ENCODE measurements at regions of chr1 and their contacts with region 1.

Region 1: GRCh38 chr1:100292711-100293110 is 26.7 kb downstream of the RTCA start:
- DNase-seq: peak; percentile 96
- H3K4me3 ChIP-seq: no peak overlapping the region
- H3K27ac ChIP-seq: peak overlapping the region; percentile 97
- H3K4me1 ChIP-seq: peaks cover 43% of the 10 kb centered on the region
- H3K27me3 ChIP-seq: no peaks in the 10 kb centered on the region
- CTCF ChIP-seq: no peak
- POLR2A ChIP-seq: peak; percentile 82

Region 2: DNA sequence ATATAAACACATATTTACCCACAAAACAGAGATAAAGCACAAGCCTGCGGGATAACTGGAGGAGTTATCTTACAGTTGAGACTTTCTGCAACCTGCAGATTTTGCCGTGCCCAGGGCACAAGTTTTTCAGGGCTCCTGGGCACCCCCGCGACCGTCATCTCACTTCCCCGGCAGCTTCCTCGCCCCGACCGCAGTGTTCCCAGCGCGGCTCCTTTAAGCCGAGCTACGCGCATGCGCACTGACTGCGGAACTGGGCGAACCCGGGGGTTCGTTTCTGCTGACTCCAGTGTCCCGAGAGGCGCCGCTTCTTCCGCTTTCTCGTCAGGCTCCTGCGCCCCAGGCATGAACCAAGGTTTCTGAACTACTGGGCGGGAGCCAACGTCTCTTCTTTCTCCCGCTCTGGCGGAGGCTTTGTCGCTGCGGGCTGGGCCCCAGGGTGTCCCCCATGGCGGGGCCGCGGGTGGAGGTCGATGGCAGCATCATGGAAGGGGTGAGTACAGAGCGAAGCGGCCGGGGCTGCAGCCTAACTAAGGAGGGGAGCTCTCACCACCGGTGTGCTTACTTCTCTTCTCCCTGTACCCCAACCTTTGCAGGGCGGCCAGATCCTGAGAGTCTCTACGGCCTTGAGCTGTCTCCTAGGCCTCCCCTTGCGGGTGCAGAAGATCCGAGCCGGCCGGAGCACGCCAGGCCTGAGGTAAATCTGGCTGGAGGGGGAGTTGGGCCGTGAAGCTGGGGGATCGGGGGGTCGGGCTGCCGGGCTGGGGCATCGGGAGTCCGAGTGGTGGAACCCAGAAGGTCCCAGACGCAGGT is 26.6 kb before region 1 on chr1 and contains the start of gene RTCA:
- CTCF ChIA-PET with region 1: interaction called, 11 read pairs
- POLR2A ChIA-PET with region 1: interaction called, 5 read pairs
- dilution Hi-C with region 1: no loop called
- intact Hi-C with region 1: loop called (anchors 2 kb)
- DNase-seq: peak; percentile 92
- H3K4me3 ChIP-seq: peak within 1 kb of the TSS; percentile 67 to 92 (median 86)
- H3K27ac ChIP-seq: peak within 1 kb of the TSS; percentile 41
- H3K4me1 ChIP-seq: peaks cover 19% of the 10 kb centered on the region
- H3K27me3 ChIP-seq: no peaks in the 10 kb centered on the region
- CTCF ChIP-seq: no peak
- POLR2A ChIP-seq: peak; percentile 90
- total RNA-seq, gene RTCA: 44.8 and 46.6 TPM in 2 replicates

Region 3: GRCh38 chr1:100308777-100309176 is 16.1 kb after region 1 on chr1:
- CTCF ChIA-PET with region 1: interaction called, 4 read pairs
- POLR2A ChIA-PET with region 1: no interaction called
- dilution Hi-C with region 1: no loop called
- intact Hi-C with region 1: loop called (anchors 1 kb)
- DNase-seq: peak; percentile 74
- H3K4me3 ChIP-seq: no peak overlapping the region
- H3K27ac ChIP-seq: no peak overlapping the region
- H3K4me1 ChIP-seq: peaks cover 9% of the 10 kb centered on the region
- H3K27me3 ChIP-seq: no peaks in the 10 kb centered on the region
- CTCF ChIP-seq: no peak
- POLR2A ChIP-seq: no peak

Region 4: DNA sequence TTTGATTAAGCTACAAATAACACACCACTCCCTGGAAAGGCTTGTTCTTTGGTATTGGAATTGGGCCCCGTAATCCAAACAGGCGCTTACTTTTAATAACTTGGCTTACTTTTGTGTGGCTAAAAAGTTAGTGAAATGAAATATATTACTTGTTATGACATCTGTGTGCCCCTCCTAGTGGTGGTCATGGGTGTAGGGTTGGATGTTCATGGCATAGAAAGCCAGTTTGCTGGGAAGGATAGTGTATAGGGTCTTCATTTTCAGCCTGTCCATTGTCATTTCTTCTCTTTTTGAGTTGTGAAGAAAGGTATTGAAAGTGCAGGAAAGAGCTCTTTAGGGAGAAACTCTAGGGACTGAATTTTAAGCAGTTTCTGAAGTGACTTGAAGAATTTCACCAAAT is 65.5 kb after region 1 on chr1:
- CTCF ChIA-PET with region 1: interaction called, 48 read pairs
- POLR2A ChIA-PET with region 1: no interaction called
- dilution Hi-C with region 1: no loop called
- intact Hi-C with region 1: no loop called
- DNase-seq: peak; percentile 47
- H3K4me3 ChIP-seq: no peak overlapping the region
- H3K27ac ChIP-seq: no peak overlapping the region
- H3K4me1 ChIP-seq: peaks cover 26% of the 10 kb centered on the region
- H3K27me3 ChIP-seq: no peaks in the 10 kb centered on the region
- CTCF ChIP-seq: peak; percentile 49
- POLR2A ChIP-seq: no peak

Region 5: DNA sequence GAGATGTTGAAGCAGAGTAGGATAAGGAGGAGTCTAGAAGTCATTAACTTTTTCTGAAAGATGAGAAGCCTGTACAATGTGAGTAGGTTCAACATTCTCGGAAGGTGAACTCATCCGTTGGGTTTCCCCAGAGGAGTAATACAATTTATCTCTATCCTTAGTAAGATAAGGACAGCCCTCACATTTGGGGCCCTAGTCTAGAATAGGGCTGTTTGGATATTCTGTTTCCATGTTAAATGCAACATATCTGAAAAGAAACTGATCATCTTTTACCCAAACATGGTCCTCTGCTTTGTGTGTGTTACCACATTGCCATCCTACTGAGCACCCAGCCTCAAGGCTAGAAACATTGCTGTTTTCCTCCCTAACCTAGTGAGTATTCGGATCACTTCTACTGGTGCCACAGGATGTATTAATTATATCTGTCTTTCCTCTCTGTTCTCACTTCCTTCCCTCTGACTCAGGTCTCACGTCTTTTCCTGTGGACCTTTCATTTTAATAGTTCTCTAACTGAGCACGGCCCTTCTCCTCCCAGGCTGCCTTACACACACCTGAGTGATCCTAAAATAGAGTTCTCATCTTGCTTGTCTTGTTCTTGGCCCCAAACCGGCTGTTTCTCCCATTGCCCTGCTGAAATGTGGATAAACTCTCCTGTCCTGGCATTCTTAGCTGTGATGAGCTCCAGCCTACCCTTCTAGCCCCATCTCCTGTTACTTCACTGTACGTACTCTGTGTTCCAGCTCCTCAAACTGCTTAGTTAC is 151.3 kb after region 1 on chr1:
- CTCF ChIA-PET with region 1: interaction called, 6 read pairs
- POLR2A ChIA-PET with region 1: no interaction called
- dilution Hi-C with region 1: no loop called
- intact Hi-C with region 1: loop called (anchors 1 kb)
- DNase-seq: peak; percentile 74
- H3K4me3 ChIP-seq: peak overlapping the region in 1 of 3 experiments; percentile 3
- H3K27ac ChIP-seq: peak overlapping the region; percentile 87
- H3K4me1 ChIP-seq: peaks cover 38% of the 10 kb centered on the region
- H3K27me3 ChIP-seq: no peaks in the 10 kb centered on the region
- CTCF ChIP-seq: no peak
- POLR2A ChIP-seq: no peak